ENCODE measurements at regions of chrX and their contacts with region 1.

Region 1: GRCh38 chrX:155417769-155418168 is 35.9 kb downstream of the F8A2 start:
- DNase-seq: no peak
- H3K4me3 ChIP-seq: no peak overlapping the region
- H3K4me1 ChIP-seq: no peaks in the 10 kb centered on the region
- H3K27me3 ChIP-seq: no peaks in the 10 kb centered on the region

Region 2: DNA sequence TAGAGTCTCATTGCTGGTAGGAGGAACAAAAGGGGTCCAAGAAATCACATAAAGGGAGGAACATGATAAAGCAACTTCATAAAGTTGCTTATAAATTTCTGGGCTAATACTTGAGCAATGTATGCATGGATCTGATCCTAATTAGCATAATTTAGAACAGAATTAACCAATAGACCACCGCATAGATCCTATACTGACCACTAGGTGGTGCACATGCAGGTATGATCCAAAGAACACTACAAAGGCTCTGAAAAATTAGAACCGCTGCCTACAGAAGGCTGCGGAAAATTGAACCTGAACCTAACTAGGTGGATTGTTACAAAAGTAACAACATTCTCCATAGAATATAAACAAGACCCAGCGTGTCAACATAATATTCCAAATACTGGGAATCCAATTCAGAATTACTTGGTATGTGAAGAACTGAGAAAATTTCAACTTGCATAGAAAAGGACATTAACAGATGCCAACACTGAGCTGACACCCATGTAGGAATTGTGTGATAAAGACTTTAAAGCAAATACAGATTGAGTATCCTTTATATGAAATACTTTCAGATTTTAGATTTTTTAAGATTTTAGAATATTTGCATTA is 323.2 kb before region 1 on chrX:
- in situ Hi-C with region 1: no loop called
- DNase-seq: peak; percentile 46 to 54
- H3K4me3 ChIP-seq: no peak overlapping the region
- H3K4me1 ChIP-seq: no peaks in the 10 kb centered on the region
- H3K27me3 ChIP-seq: no peaks in the 10 kb centered on the region

Region 3: DNA sequence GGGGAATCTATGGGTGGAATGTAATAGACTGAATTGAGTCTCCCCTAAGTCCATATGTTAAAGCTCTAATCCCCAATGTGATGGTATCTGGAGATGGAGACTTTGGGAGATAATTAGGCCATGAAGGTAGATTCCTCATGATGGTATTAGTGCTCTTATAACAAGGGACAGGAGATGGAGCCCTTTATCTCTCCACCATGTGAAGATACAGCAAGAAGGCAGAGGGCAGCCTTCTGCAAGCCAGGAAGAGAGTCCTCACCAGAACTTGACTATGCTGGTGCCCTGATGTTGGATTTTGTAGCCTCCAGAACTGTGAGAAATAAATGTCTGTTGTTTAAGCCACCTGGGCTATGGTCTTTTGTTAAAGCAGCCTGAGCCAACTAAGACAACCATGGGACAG is 117.0 kb after region 1 on chrX:
- in situ Hi-C with region 1: loop called (anchors 25 kb)
- DNase-seq: no peak
- H3K4me3 ChIP-seq: no peak overlapping the region
- H3K4me1 ChIP-seq: no peaks in the 10 kb centered on the region
- H3K27me3 ChIP-seq: no peaks in the 10 kb centered on the region

Region 4: DNA sequence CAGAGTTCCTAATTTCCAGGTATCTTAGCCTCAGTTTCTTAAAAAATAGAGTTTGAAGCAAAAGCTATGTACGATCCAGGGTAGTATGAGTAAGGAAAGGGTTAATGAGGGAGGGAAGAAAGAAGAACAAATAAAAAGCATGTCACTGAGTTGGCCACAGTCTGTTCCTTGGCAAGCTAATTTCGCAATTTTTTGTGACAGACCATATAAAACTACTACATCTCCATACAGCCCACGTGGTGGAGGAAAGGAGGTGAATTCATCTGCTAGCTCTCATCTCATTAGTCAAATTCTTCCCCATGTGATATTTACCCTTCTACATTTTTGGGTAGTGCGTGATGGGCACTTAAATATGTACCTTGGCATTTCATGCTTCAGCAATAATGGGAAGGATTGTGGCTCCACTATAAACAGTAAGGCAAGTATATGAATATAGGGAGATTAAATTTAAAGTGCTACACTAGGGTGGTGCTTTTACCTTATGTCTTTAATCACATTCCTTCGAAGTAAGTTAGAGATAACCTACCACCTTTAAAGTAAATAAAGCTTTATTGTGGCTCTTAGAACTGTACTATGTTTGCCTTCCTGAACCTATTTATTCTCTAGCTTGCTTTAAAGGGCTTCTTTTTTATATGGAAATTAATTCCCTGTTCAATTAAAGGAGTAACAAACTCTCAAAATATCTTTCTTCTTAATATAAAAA is 361.2 kb after region 1 on chrX:
- in situ Hi-C with region 1: no loop called
- DNase-seq: no peak
- H3K4me3 ChIP-seq: no peak overlapping the region
- H3K4me1 ChIP-seq: no peaks in the 10 kb centered on the region
- H3K27me3 ChIP-seq: no peaks in the 10 kb centered on the region